AG04449 (cell line): ENCODE measurements at regions of chr3 and their contacts with region 1.

Region 1: GRCh38 chr3:107421170-107421792 is 44.0 kb downstream of the CCDC54 start:
- DNase-seq: no peak
- H3K4me3 ChIP-seq: peak overlapping the region; percentile 49
- CTCF ChIP-seq: peak; percentile 61

Region 2: GRCh38 chr3:107264888-107265287 is 156.4 kb before region 1 on chr3:
- CTCF ChIA-PET with region 1: interaction called, 287 read pairs
- POLR2A ChIA-PET with region 1: no interaction called
- DNase-seq: no peak
- H3K4me3 ChIP-seq: no peak overlapping the region
- CTCF ChIP-seq: no peak

Region 3: DNA sequence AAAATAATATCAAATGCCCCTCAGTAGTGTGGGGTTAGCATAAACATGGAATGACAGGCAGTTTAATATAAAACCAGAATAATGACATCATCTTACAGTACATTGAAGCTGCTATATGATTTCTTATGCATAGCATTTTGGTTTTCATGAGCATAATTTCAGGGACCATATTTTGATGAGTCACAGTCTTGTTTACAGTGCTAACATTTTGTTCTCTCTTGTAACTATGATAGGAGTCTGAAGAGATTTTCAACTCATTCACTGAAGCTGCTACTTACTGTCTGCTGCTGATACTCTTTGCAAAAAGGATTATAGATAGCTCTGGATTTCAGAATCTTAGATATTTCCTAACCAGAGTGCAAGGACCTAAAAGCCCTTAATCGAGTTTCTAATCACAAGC is 136.7 kb before region 1 on chr3:
- CTCF ChIA-PET with region 1: interaction called, 17 read pairs
- POLR2A ChIA-PET with region 1: no interaction called
- DNase-seq: no peak
- H3K4me3 ChIP-seq: no peak overlapping the region
- CTCF ChIP-seq: no peak

Region 4: DNA sequence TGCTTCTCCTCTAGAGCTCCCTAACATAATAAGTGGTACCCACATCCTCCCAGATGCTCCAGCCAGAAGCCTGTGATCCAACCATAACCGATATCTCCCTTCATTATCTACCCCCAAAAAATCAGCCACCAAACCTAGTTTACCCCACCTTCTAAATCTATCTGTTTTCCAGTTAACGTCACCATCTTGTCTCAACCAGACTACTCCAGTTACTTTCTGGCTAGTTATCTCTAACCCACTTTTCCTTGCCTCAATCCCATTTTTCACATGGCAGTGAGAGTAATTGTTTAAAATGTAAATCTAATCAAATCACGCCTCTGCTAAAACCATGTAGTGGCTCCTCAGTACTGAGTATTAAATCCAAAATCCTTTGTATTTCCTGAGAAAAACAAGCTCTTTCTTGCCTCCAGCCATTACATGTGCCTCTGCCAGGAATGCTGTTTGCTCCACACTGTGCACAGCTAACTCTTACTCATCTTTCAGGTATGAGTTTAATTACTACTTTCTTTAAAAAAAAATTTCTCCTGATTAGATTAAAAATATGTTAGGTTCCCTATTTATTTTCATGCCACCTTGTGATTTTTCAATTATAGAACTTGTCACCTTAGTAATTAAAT is 28.6 kb before region 1 on chr3:
- CTCF ChIA-PET with region 1: interaction called, 11 read pairs
- POLR2A ChIA-PET with region 1: no interaction called
- DNase-seq: peak; percentile 41
- H3K4me3 ChIP-seq: no peak overlapping the region
- CTCF ChIP-seq: no peak

Region 5: DNA sequence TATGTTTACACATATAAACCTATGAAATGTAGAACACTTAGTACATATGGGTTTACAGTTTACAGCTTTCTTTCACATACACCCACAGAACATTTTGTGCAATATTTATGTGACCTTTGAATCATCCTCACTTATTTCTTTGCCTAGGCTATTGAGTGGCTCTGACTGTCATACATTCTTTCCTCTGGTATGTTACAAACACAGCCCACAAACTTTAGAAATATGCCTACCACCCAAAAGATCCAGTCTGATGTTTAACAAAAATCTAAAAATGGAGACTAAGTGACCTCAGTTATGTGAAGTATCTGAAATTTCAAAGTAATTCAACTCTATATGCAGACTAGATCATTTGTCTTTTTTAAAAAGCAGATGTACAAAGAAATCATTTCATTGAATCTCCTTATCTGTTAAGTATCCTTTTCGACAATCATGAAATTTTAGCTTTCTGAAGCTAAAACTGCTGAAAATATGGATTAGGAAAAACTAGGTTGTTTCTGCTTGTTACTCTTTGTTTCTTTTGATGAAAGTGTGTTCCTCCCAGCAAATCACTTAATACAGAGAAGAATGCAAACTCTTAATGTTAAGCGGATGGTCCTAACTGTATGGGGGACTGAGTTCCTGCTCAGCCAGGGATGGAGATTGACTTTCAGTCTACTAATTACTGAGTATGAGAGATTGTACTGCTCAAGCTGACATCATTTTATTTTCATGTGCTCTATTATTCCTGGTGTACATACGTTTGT is 16.4 kb before region 1 on chr3:
- CTCF ChIA-PET with region 1: interaction called, 61 read pairs
- POLR2A ChIA-PET with region 1: no interaction called
- DNase-seq: peak; percentile 73
- H3K4me3 ChIP-seq: no peak overlapping the region; the same call in 1 of the 2 replicates
- CTCF ChIP-seq: no peak